Activated CD4-positive, alpha-beta memory T cell treated with anti-CD3 and anti-CD28 coated beads, Interleukin-2, amount 10 ng/mL, durations not matched to agents 7 days and 5 days (primary cell): ENCODE measurements at regions of chr1 and their contacts with region 1.

Region 1: GRCh38 chr1:16946646-16947045 is 24.9 kb downstream of the CROCC start:
- DNase-seq: no peak
- H3K4me3 Mint-ChIP-seq: no peak overlapping the region
- H3K27ac Mint-ChIP-seq: no peak overlapping the region
- H3K4me1 Mint-ChIP-seq: no peaks in the 10 kb centered on the region
- H3K27me3 Mint-ChIP-seq: no peaks in the 10 kb centered on the region

Region 2: GRCh38 chr1:16625497-16626408 is 320.9 kb before region 1 on chr1:
- CTCF ChIA-PET with region 1: interaction called, 23 read pairs
- POLR2A ChIA-PET with region 1: interaction called, 3 read pairs
- DNase-seq: no peak
- H3K4me3 Mint-ChIP-seq: no peak overlapping the region
- H3K27ac Mint-ChIP-seq: no peak overlapping the region
- H3K4me1 Mint-ChIP-seq: peaks cover 3% of the 10 kb centered on the region
- H3K27me3 Mint-ChIP-seq: no peaks in the 10 kb centered on the region

Region 3: DNA sequence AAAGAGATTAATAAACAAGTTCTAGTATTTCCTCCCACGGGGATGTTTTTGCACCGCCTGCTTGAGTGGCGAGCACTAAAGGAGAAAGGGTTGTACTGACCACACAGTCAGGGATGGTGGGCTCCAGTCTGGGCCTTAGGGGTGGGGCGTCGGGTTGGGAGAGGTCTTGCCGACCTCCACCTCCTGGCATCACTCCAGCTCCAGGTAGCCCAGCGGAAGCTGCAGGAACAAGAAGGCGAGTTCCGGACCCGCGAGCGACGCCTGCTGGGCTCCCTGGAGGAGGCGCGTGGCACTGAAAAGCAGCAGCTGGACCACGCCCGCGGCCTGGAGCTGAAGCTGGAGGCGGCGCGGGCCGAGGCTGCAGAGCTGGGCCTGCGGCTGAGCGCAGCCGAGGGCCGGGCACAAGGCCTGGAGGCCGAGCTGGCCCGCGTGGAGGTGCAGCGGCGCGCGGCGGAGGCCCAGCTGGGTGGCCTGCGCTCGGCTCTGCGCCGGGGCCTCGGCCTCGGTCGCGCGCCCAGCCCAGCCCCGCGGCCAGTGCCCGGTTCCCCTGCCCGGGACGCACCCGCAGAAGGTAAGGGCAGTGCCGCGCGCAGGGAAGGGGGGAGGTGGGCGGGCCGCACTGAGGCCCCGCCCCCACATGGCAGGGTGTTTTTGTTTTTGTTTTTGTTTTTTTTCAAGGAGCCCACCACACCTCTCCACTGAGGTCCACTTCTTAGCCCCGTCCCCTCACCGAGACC is 14.1 kb after region 1 on chr1:
- CTCF ChIA-PET with region 1: interaction called, 34 read pairs
- POLR2A ChIA-PET with region 1: no interaction called
- DNase-seq: peak; percentile 86
- H3K4me3 Mint-ChIP-seq: peak overlapping the region; percentile 70
- H3K27ac Mint-ChIP-seq: peak overlapping the region; percentile 62
- H3K4me1 Mint-ChIP-seq: peaks cover 13% of the 10 kb centered on the region
- H3K27me3 Mint-ChIP-seq: no peaks in the 10 kb centered on the region

Region 4: GRCh38 chr1:17045634-17046333 is 99.1 kb after region 1 on chr1:
- CTCF ChIA-PET with region 1: interaction called, 43 read pairs
- POLR2A ChIA-PET with region 1: no interaction called
- DNase-seq: no peak
- H3K4me3 Mint-ChIP-seq: no peak overlapping the region
- H3K27ac Mint-ChIP-seq: peak overlapping the region; percentile 64
- H3K4me1 Mint-ChIP-seq: peaks cover 22% of the 10 kb centered on the region
- H3K27me3 Mint-ChIP-seq: no peaks in the 10 kb centered on the region

Region 5: GRCh38 chr1:17075470-17076255 is 129.0 kb after region 1 on chr1:
- CTCF ChIA-PET with region 1: interaction called, 11 read pairs
- POLR2A ChIA-PET with region 1: no interaction called
- DNase-seq: peak; percentile 44
- H3K4me3 Mint-ChIP-seq: no peak overlapping the region
- H3K27ac Mint-ChIP-seq: no peak overlapping the region
- H3K4me1 Mint-ChIP-seq: peaks cover 4% of the 10 kb centered on the region
- H3K27me3 Mint-ChIP-seq: peaks cover 4% of the 10 kb centered on the region

Region 6: GRCh38 chr1:17274186-17275170 is 327.8 kb after region 1 on chr1:
- CTCF ChIA-PET with region 1: no interaction called
- POLR2A ChIA-PET with region 1: no interaction called
- DNase-seq: peak; percentile 46
- H3K4me3 Mint-ChIP-seq: no peak overlapping the region
- H3K27ac Mint-ChIP-seq: no peak overlapping the region
- H3K4me1 Mint-ChIP-seq: no peaks in the 10 kb centered on the region
- H3K27me3 Mint-ChIP-seq: peaks cover 6% of the 10 kb centered on the region